Right ventricle myocardium inferior (tissue), 1 donor: ENCODE measurements at regions of chr1 and their contacts with region 1.

Region 1: DNA sequence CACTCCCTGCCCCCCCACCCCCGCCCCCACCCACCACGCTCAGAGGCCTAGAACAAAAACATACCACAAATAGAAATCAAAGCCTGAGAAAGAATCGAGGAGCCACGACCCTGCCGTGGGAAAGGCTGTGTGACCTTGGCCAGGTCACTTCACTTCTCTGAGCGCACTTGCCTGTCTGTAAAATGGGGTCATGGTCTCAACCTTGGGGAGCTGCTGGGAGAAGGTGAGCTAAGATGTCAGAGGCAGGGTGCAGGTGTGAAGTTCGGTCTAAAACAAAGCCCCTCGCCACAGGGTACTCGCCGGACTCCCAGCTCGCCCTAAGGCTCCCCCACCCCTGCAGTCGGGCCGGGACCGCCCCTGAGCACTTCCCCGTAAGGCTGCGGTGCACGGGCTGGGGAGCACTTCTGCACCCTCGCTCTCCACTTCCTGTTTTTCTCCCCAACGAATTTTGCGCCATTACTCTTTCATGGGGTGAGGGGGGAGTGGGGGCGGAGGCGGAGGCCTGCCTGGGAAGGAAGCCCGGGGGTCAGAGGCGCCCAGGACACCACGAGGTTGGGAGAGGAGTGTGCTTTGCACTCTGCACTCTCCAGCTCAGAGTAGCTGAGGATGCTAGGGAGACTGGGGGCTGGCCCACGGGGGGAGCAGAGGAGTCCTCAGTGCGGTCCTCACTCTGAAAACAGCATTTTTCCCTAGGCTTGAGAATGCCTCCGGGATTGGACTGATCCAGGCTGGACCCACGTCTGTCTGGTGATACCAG is 21.9 kb upstream of the PIK3CD start:
- DNase-seq: peak; percentile 86
- ATAC-seq: peak; percentile 47

Region 2: GRCh38 chr1:9410737-9411297 is 218.8 kb before region 1 on chr1:
- intact Hi-C with region 1: no loop called
- DNase-seq: no peak
- ATAC-seq: no peak

Region 3: DNA sequence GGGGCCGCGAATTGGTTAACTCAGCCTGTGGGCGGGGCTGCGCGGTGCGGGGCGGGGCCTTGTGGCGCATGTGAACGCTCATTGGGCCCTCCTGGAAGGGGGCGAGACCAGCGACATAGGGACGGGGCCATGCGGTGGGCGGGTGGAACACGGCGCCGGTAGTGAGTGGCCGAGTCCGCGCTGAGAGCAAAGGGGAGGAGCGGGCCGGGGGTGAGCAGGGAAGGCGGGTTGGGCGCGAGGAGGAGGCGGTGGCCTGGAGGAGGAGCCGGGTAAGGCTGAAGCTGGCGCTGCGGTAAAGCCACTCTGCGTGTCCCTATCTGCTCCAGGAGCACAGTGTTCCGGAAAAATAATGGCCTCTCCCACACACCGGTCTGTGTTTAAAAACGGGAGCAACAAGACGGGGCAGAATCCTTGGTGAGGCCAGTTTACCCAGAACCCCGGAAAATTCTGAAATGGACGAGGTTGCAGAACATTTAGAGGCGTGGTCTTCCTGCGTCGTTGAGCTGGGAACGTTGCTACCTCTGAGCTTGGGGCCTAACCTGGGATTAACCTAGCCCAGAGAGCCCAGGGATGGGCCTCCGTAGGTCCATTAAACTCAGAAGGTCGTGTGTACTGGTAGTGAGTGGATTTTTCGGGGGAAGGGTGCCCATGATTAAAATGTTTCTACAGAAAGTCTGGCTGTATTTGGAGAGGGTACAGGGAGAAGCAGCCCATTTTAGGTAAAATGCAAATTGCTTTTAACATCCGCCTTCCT is 281.0 kb after region 1 on chr1:
- intact Hi-C with region 1: loop called (anchors 5 kb)
- DNase-seq: peak; percentile 100
- ATAC-seq: peak; percentile 99